Gastrocnemius medialis (tissue), 4 donors: ENCODE measurements at regions of chr1 and their contacts with region 1.

Region 1: GRCh38 chr1:40404670-40405462 is 31.3 kb downstream of the SMAP2 start:
- DNase-seq: no peak
- ATAC-seq: peak; percentile 52 to 78
- H3K4me3 ChIP-seq: no peak overlapping the region
- H3K27ac ChIP-seq: no peak overlapping the region
- H3K4me1 ChIP-seq: no peaks in the 10 kb centered on the region
- H3K27me3 ChIP-seq: no peaks in the 10 kb centered on the region
- CTCF ChIP-seq: peak; percentile 78 to 87 (median 82)
- POLR2A ChIP-seq: no peak

Region 2: GRCh38 chr1:40153073-40153770 is 251.6 kb before region 1 on chr1:
- in situ Hi-C with region 1: loop called in 3 of 4 experiments (anchors 5 to 10 kb)
- intact Hi-C with region 1: loop called (anchors 2 kb)
- DNase-seq: no peak
- ATAC-seq: peak in 1 of 2 donors; percentile 51
- H3K4me3 ChIP-seq: no peak overlapping the region
- H3K27ac ChIP-seq: no peak overlapping the region
- H3K4me1 ChIP-seq: peaks cover 0 to 3% of the 10 kb centered on the region in 2 donors
- H3K27me3 ChIP-seq: no peaks in the 10 kb centered on the region
- CTCF ChIP-seq: peak in 4 of 5 experiments; percentile 14 to 72 (median 58)
- POLR2A ChIP-seq: no peak

Region 3: GRCh38 chr1:40338745-40339424 is 66.0 kb before region 1 on chr1:
- in situ Hi-C with region 1: loop called in 1 of 4 experiments (anchors 10 kb)
- intact Hi-C with region 1: loop called (anchors 5 kb)
- DNase-seq: peak; percentile 41 to 74
- ATAC-seq: peak; percentile 62 to 94
- H3K4me3 ChIP-seq: peak overlapping the region in 1 of 4 donors; percentile 22
- H3K27ac ChIP-seq: no peak overlapping the region
- H3K4me1 ChIP-seq: no peaks in the 10 kb centered on the region
- H3K27me3 ChIP-seq: no peaks in the 10 kb centered on the region
- CTCF ChIP-seq: peak; percentile 92 to 98 (median 96)
- POLR2A ChIP-seq: no peak

Region 4: DNA sequence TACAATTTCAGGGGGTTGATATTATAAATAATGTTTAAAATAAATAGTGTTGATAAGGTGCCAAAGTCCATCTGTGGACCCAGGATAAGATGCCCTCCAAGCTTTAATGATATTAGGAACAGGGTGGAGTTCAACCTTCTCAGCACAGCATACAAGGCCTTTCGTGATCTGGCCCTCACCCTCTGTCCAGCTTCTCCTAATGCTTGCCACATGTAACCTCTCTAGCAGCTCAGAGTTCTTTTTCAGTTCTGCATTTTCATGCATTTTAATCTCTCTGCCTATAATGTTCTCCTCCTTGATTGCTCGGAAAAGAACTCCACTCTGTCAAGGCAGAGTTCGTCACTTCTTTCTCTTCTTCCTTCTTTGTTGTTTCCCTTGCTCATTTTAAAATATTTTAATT is 52.7 kb before region 1 on chr1:
- in situ Hi-C with region 1: loop called in 2 of 4 experiments (anchors 10 kb)
- intact Hi-C with region 1: no loop called
- DNase-seq: no peak
- ATAC-seq: no peak
- H3K4me3 ChIP-seq: no peak overlapping the region
- H3K27ac ChIP-seq: no peak overlapping the region
- H3K4me1 ChIP-seq: no peaks in the 10 kb centered on the region
- H3K27me3 ChIP-seq: no peaks in the 10 kb centered on the region
- CTCF ChIP-seq: no peak
- POLR2A ChIP-seq: no peak